Dorsolateral prefrontal cortex (tissue), 120 donors: ENCODE measurements at regions of chr4 and their contacts with region 1.

Region 1: GRCh38 chr4:82462415-82462831 is 32.0 kb downstream of the ENOPH1 start:
- DNase-seq: peak; percentile 71 to 97 (median 86)
- H3K4me3 ChIP-seq: peak overlapping the region in 4 of 59 donors; percentile 6 to 21 (median 8)
- H3K27ac ChIP-seq: peak overlapping the region in 36 of 59 donors; percentile 0 to 73 (median 42)
- H3K27me3 ChIP-seq: no peaks in the 10 kb centered on the region
- CTCF ChIP-seq: peak; percentile 73 to 99 (median 95)

Region 2: GRCh38 chr4:81852031-81852715 is 610.2 kb before region 1 on chr4:
- intact Hi-C with region 1: no loop called
- DNase-seq: peak in 1 of 10 donors; percentile 58
- H3K4me3 ChIP-seq: no peak overlapping the region
- H3K27ac ChIP-seq: no peak overlapping the region
- H3K27me3 ChIP-seq: peaks cover 0 to 3% (median 0%) of the 10 kb centered on the region in 45 donors
- CTCF ChIP-seq: no peak

Region 3: GRCh38 chr4:82044142-82044993 is 418.1 kb before region 1 on chr4:
- intact Hi-C with region 1: no loop called
- DNase-seq: peak; percentile 39 to 75 (median 58)
- H3K4me3 ChIP-seq: peak overlapping the region; percentile 41 to 76 (median 62)
- H3K27ac ChIP-seq: peak overlapping the region in 1 of 59 donors; percentile 18
- H3K27me3 ChIP-seq: peaks cover 0 to 13% (median 0%) of the 10 kb centered on the region in 45 donors
- CTCF ChIP-seq: no peak

Region 4: DNA sequence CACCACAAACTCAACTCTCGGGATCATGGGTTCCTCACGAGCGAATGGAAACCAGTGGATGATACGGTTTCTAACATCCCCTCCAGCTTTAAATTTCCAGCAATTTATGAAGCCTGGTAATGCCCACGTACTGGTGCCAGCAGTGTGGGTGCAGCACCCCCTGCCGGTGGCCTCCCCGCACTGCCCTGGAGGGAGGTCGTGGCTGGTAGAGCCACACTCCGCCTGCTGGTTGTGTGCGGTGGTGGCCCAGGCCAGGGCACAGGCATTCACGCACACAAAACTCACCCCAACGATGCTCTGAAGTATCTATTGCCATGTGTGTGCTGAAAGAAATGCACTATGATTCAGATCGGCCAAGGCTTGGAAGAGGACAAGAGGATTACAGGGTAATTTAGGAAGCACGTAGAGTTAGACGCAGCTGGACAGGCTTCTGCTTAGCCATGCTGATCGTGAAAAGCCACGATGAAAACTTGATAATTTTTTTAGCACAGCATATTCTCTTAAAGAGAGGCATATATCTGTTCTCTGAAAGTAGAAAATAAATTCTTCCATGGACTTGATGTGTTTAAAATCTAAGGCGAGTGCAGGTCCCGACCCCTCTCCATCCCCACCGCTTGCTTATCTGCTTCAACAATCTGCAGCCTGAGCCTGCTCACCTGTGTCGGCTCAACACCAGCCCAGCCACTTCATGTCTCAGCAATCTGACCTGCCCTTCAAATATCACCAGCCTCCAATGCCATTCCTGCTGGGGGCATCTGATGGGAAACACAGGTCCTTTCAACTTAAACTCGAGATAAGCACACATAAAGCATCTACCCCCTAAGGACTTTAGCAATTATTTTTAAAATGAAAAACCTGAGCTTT is 277.1 kb after region 1 on chr4:
- intact Hi-C with region 1: loop called (anchors 5 kb)
- DNase-seq: peak in 9 of 10 donors; percentile 50 to 81 (median 75)
- H3K4me3 ChIP-seq: peak overlapping the region in 1 of 59 donors; percentile 2
- H3K27ac ChIP-seq: peak overlapping the region in 56 of 59 donors; percentile 9 to 94 (median 75)
- H3K27me3 ChIP-seq: no peaks in the 10 kb centered on the region
- CTCF ChIP-seq: peak; percentile 40 to 100 (median 94)

Region 5: DNA sequence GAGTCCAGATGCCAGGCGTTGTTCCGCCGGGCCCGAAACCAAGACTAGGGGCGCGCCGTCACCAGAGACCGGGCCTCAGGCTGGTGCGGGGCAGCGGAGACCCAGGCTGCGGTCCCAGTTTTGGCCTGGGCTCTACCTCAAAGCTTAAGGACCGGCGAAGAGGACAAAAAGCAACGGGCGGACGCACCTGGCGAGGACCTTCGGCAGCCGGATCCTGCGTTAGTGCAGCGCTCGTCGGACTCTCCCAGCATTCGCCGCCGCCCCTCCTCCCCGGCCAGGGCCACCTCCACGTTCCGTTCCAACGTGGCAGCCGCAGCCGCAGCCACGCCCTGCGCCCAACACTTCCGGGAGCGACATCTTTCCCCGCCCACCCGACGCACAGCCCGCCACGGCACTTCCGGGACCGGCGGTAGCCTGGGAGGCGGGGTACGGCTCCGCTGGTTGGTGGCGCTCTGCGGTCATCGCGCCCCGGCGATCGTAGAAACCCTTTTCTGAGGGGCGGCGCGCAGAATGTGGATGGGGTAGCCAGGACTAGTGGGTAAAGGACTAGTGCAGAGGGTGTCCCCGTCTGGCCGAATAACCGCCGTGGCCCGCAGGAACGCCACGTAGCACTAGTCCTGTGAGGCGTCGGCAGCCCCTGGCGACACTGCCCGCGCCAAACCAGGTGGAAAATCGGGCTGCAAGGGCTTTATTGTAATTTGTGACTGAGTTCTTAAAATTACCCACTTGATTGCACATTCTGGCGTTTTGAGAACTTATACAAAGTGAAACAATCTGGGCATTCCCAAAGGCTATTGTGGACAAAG is 428.7 kb after region 1 on chr4 and contains the start of gene SEC31A:
- intact Hi-C with region 1: loop called (anchors 5 to 10 kb)
- DNase-seq: peak; percentile 88 to 96 (median 92)
- H3K4me3 ChIP-seq: peak within 1 kb of the TSS; percentile 58 to 100 (median 91)
- H3K27ac ChIP-seq: peak within 1 kb of the TSS; percentile 62 to 99 (median 93)
- H3K27me3 ChIP-seq: no peaks in the 10 kb centered on the region
- CTCF ChIP-seq: peak in 50 of 56 donors; percentile 13 to 74 (median 44)
- total RNA-seq, gene SEC31A: 85.5 to 171 (median 130) TPM

Region 6: DNA sequence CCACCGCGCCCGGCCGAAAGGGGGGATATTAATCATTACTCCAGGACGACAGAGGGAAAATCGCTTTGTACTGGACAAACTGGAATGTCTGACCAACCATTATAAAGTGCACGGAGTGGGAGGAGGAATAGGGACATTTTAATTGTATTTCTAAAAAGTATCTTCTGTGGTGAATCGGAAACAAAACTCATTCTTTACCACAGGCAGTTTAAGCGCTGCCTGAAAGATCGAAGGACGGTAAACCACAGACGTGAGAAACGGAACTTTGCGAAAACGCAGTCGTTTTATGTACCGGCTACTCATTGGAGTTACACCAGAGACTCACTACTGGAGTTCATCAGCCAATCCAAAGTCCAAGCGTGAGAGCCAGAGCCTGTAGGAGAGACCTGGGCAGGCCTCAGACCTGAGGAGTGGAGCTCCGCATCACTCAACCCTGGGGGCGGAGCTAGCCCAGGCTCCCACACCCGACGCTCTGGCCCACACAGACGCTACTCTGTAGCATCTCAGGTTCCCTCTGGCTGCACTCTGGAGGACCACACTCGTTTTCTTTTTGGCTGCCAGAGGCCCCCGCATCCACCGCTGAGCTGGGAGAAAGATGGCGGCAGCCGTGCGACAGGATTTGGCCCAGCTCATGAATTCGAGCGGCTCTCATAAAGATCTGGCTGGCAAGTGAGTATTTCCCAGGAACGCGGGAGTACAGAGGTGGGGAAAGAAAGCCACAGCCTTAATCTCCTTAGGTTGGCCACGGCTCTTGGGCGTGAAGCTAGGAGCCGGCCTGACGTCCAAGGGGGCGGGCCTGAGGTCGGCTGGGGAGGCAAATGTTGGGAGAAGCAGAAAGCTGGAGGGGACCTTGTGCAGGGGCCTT is 572.4 kb after region 1 on chr4 and contains the start of gene COPS4:
- intact Hi-C with region 1: loop called in 1 of 2 experiments (anchors 10 kb)
- DNase-seq: peak; percentile 87 to 99 (median 98)
- H3K4me3 ChIP-seq: peak within 1 kb of the TSS; percentile 65 to 97 (median 86)
- H3K27ac ChIP-seq: peak within 1 kb of the TSS; percentile 75 to 99 (median 93)
- H3K27me3 ChIP-seq: no peaks in the 10 kb centered on the region
- CTCF ChIP-seq: peak in 54 of 56 donors; percentile 15 to 72 (median 53)
- total RNA-seq, gene COPS4: 22.8 to 75.1 (median 50.8) TPM

Region 7: DNA sequence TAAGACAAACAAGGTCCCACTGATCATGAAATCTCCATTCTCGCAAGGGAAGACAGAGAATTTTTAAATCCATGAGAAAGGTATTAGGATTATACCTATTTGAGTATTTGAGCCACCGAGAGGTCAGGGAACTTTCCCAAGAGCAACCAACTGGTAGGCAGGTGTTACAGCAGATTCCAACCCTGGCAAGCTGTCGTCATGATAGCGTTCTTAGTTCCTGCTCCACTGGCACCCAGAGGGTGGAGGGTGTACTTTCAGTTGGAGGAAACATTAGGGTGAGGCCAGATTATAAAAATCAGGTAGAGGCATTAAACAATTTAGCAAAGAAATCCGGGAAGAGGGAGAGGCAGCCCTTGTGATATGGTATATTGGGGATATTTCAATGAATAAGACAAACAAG is 798.9 kb after region 1 on chr4:
- intact Hi-C with region 1: loop called in 1 of 2 experiments (anchors 2 kb)
- DNase-seq: no peak
- H3K4me3 ChIP-seq: no peak overlapping the region
- H3K27ac ChIP-seq: no peak overlapping the region
- H3K27me3 ChIP-seq: no peaks in the 10 kb centered on the region
- CTCF ChIP-seq: no peak